ENCODE measurements at regions of chr11 and their contacts with region 1.

Region 1: DNA sequence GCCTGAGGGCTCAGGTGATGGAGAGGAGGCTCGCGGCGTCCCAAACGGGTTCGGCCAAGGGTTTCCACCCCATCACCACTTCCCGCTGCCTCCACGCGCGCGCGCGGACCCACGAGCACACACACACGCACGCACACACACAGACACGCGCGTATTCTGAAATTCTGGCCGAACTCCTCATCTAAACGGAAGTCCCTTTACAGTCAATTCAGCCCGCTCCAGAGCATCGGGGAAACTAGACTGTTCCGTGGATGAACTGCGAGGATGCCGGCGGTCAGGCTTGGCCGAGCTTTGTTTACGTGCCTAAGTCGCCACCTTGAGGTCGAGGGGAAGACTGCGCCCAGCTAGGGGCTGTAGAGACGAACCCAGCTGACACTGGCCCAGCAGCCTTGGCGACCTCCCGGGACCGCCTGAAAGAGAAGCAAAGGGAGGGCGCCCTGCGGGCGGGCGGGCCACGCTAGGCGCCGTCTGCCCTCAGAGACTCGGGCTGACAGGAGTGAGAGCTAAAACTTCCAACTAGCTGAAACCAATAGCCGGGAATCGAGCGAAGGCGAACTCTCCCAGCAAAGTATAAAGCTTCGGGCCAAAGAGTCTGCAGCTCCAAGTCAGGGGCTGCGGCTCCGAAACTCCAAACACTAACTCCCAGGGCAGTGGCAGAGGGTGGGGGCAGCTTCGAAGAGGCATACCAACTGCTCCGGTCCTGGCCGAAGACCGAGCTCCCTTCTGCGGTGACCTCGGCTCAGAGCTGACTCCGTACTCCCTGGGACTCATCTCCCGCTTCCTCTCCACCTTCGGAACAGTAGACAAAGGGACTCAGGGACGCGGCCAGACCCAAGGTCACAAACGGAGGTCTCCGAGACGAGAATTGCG is 124.7 kb upstream of the C11orf58 start:
- DNase-seq: peak; percentile 61
- ATAC-seq: peak; percentile 99
- H3K4me3 ChIP-seq: peak overlapping the region; percentile 23 to 45
- H3K27ac ChIP-seq: no peak overlapping the region
- H3K4me1 ChIP-seq: peaks cover 0 to 14% of the 10 kb centered on the region in 2 experiments; a peak in 2 of 4 replicates
- H3K27me3 ChIP-seq: peaks cover 44% of the 10 kb centered on the region
- CTCF ChIP-seq: peak; percentile 62 to 88 (median 88)
- POLR2A ChIP-seq: no peak
- RAD21 ChIP-seq: peak; percentile 88

Region 2: DNA sequence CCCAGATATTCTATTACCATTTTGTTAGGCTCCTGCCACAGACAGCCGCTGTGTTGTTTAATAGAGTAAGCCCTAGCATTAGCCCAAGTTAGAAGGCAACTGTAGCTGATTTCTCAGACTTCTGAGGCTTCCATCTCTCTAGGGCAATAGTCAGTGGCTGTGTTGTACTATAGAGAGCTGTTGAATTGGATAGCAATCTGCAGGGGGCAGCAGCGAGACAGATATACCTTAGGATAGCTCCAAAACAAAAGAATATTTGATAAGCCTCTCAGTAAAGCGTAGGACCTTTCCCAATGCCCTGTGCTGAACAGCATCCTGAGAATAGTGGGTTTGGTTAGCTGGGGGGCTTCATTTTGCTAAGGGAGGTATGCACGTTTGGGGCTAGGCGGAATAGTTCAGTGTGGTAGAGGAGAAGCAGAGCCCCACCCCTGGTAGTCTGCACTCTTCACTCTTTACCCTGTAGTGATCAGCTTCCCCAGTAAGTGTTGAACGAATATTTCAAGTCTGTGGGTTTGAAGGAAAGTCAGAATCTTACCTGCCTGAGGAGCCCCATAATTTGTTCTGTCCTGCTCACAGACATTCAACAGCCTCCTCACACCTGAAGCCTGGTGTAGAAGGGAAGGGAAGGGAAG is 983.9 kb before region 1 on chr11:
- CTCF ChIA-PET with region 1: no interaction called
- POLR2A ChIA-PET with region 1: no interaction called
- RAD21 ChIA-PET with region 1: no interaction called
- intact Hi-C with region 1: loop called (anchors 5 kb)
- DNase-seq: peak; percentile 16
- ATAC-seq: peak; percentile 92
- H3K4me3 ChIP-seq: no peak overlapping the region
- H3K27ac ChIP-seq: no peak overlapping the region
- H3K4me1 ChIP-seq: no peaks in the 10 kb centered on the region
- H3K27me3 ChIP-seq: peaks cover 16% of the 10 kb centered on the region; the same call in 1 of the 2 replicates
- CTCF ChIP-seq: peak in 2 of 3 experiments; percentile 51 to 55; a peak in 4 of 6 replicates
- POLR2A ChIP-seq: no peak
- RAD21 ChIP-seq: peak; percentile 35; the same call in 1 of the 2 replicates

Region 3: GRCh38 chr11:15770798-15771414 is 842.8 kb before region 1 on chr11:
- CTCF ChIA-PET with region 1: no interaction called
- POLR2A ChIA-PET with region 1: no interaction called
- RAD21 ChIA-PET with region 1: no interaction called
- intact Hi-C with region 1: loop called (anchors 2 kb)
- DNase-seq: peak; percentile 13
- ATAC-seq: peak; percentile 88
- H3K4me3 ChIP-seq: no peak overlapping the region
- H3K27ac ChIP-seq: no peak overlapping the region
- H3K4me1 ChIP-seq: peaks cover 9 to 10% of the 10 kb centered on the region in 2 experiments
- H3K27me3 ChIP-seq: peaks cover 29% of the 10 kb centered on the region
- CTCF ChIP-seq: peak in 2 of 3 experiments; percentile 72 to 82; a peak in 4 of 6 replicates
- POLR2A ChIP-seq: no peak
- RAD21 ChIP-seq: peak; percentile 41; the same call in 1 of the 2 replicates

Region 4: GRCh38 chr11:15852179-15852578 is 761.6 kb before region 1 on chr11:
- CTCF ChIA-PET with region 1: interaction called, 33 read pairs
- POLR2A ChIA-PET with region 1: no interaction called
- RAD21 ChIA-PET with region 1: interaction called in 1 of 2 experiments, 3 read pairs
- intact Hi-C with region 1: loop called (anchors 1 kb)
- DNase-seq: peak; percentile 19
- ATAC-seq: no peak
- H3K4me3 ChIP-seq: no peak overlapping the region
- H3K27ac ChIP-seq: no peak overlapping the region
- H3K4me1 ChIP-seq: no peaks in the 10 kb centered on the region
- H3K27me3 ChIP-seq: peaks cover 39% of the 10 kb centered on the region
- CTCF ChIP-seq: peak; percentile 42 to 62 (median 57); a peak in 5 of 6 replicates
- POLR2A ChIP-seq: no peak
- RAD21 ChIP-seq: peak; percentile 59